A549 (cell line): ENCODE measurements at regions of chr14 and their contacts with region 1.

Region 1: DNA sequence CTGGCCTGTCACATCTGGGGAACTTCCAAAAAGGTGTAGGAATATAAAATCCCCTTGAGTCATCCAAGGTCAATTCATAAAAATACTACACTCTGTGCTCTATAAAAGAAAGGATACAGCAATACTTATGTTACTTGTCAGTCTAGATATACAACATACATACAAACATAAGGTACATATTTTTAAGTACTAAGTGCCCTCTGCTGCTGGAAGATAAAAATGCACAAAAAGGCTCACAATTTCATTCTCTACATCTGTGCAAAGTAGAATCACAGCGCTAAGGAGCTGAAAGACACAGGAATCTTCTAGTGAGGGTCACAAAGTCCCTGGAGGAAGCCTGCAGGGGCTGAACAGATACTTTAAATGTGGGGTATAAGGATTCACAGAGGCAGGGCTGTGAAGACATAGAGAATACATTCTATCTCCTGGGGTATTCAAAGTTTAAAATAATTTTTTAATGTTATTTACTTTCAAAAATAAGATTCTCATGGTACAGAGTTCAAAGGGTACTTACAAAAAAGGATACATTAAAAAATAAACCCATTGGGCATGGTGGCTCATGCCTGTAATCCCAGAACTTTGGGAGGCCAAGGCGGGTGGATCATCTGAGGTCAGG is 10.2 kb upstream of the GOLGA5 start:
- DNase-seq: peak; percentile 69 to 70
- ATAC-seq: peak; percentile 75 to 88; a peak in 5 of 6 replicates
- H3K4me3 ChIP-seq: no peak overlapping the region
- H3K27ac ChIP-seq: 0 out of 6 replicates have a peak overlapping the region, but pooled peaks of 1 of the 2 experiments have one; percentile 29
- H3K4me1 ChIP-seq: peaks cover 14% of the 10 kb centered on the region; the same call in 2 of the 3 replicates
- CTCF ChIP-seq: peak; percentile 82
- EP300 ChIP-seq: no peak
- POLR2A ChIP-seq: no peak
- RAD21 ChIP-seq: peak; percentile 84 to 86

Region 2: GRCh38 chr14:92717571-92718042 is 66.3 kb before region 1 on chr14:
- CTCF ChIA-PET with region 1: interaction called, 132 read pairs
- POLR2A ChIA-PET with region 1: no interaction called
- DNase-seq: no peak
- ATAC-seq: no peak
- H3K4me3 ChIP-seq: no peak overlapping the region
- H3K27ac ChIP-seq: no peak overlapping the region
- H3K4me1 ChIP-seq: peaks cover 15% of the 10 kb centered on the region
- CTCF ChIP-seq: no peak
- EP300 ChIP-seq: no peak
- POLR2A ChIP-seq: no peak
- RAD21 ChIP-seq: no peak

Region 3: GRCh38 chr14:92728759-92729370 is 55.1 kb before region 1 on chr14:
- CTCF ChIA-PET with region 1: interaction called, 14 read pairs
- POLR2A ChIA-PET with region 1: no interaction called
- DNase-seq: peak in 1 of 2 experiments; percentile 28
- ATAC-seq: no peak
- H3K4me3 ChIP-seq: no peak overlapping the region
- H3K27ac ChIP-seq: peak overlapping the region in 1 of 2 experiments; percentile 73; a peak in 3 of 6 replicates
- H3K4me1 ChIP-seq: peaks cover 52% of the 10 kb centered on the region
- CTCF ChIP-seq: no peak
- EP300 ChIP-seq: no peak
- POLR2A ChIP-seq: no peak
- RAD21 ChIP-seq: no peak

Region 4: GRCh38 chr14:92748259-92749016 is 35.5 kb before region 1 on chr14 and contains the start of gene LGMN:
- CTCF ChIA-PET with region 1: interaction called, 13 read pairs
- POLR2A ChIA-PET with region 1: interaction called, 6 read pairs
- DNase-seq: peak; percentile 94 to 97
- ATAC-seq: peak; percentile 100
- H3K4me3 ChIP-seq: peak within 1 kb of the TSS; percentile 73
- H3K27ac ChIP-seq: peak within 1 kb of the TSS; percentile 75 to 91
- H3K4me1 ChIP-seq: peaks cover 4% of the 10 kb centered on the region; the same call in 1 of the 3 replicates
- CTCF ChIP-seq: no peak
- EP300 ChIP-seq: no peak
- POLR2A ChIP-seq: peak; percentile 97
- RAD21 ChIP-seq: no peak
- polyA plus RNA-seq, gene LGMN: 106 and 136 TPM in 2 replicates

Region 5: GRCh38 chr14:92755495-92755894 is 28.4 kb before region 1 on chr14:
- CTCF ChIA-PET with region 1: interaction called, 13 read pairs
- POLR2A ChIA-PET with region 1: no interaction called
- DNase-seq: no peak
- ATAC-seq: no peak
- H3K4me3 ChIP-seq: no peak overlapping the region
- H3K27ac ChIP-seq: no peak overlapping the region
- H3K4me1 ChIP-seq: no peaks in the 10 kb centered on the region
- CTCF ChIP-seq: no peak
- EP300 ChIP-seq: no peak
- POLR2A ChIP-seq: no peak
- RAD21 ChIP-seq: no peak

Region 6: DNA sequence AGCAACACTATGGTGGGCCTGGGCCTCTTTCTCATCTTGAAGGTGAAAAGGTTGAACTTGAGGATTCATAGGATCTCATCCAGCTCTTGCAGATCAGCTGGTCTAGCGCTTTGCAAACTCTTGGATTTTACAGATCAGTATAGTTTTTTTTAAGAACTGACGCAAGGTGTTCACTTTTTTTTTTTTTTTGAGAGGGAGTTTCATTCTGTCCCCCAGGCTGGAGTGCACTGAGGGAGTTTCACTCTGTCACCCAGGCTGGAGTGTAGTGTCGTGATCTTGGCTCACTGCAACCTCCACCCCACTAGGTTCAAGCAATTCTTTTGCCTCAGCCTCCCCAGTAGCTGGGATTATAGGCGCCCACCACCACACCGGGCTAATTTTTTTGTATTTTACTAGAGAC is 15.1 kb before region 1 on chr14:
- CTCF ChIA-PET with region 1: interaction called, 15 read pairs
- POLR2A ChIA-PET with region 1: no interaction called
- DNase-seq: no peak
- ATAC-seq: no peak
- H3K4me3 ChIP-seq: no peak overlapping the region
- H3K27ac ChIP-seq: no peak overlapping the region
- H3K4me1 ChIP-seq: no peaks in the 10 kb centered on the region
- CTCF ChIP-seq: no peak
- EP300 ChIP-seq: no peak
- POLR2A ChIP-seq: no peak
- RAD21 ChIP-seq: no peak